H1 (cell line): ENCODE measurements at regions of chr12 and their contacts with region 1.

Region 1: GRCh38 chr12:46071769-46072624 is 81.6 kb upstream of the SCAF11 start:
- DNase-seq: peak; percentile 46 to 80
- H3K4me3 ChIP-seq: no peak overlapping the region
- H3K27ac ChIP-seq: no peak overlapping the region
- H3K4me1 ChIP-seq: no peaks in the 10 kb centered on the region
- H3K27me3 ChIP-seq: no peaks in the 10 kb centered on the region
- CTCF ChIP-seq: peak; percentile 88 to 96 (median 91)
- EP300 ChIP-seq: no peak
- POLR2A ChIP-seq: no peak
- RAD21 ChIP-seq: peak; percentile 92 to 93

Region 2: GRCh38 chr12:45914090-45914489 is 157.9 kb before region 1 on chr12:
- CTCF ChIA-PET with region 1: no interaction called
- POLR2A ChIA-PET with region 1: no interaction called
- DNase-seq: no peak
- H3K4me3 ChIP-seq: no peak overlapping the region
- H3K27ac ChIP-seq: no peak overlapping the region
- H3K4me1 ChIP-seq: no peaks in the 10 kb centered on the region
- H3K27me3 ChIP-seq: no peaks in the 10 kb centered on the region
- CTCF ChIP-seq: no peak
- EP300 ChIP-seq: no peak
- POLR2A ChIP-seq: no peak
- RAD21 ChIP-seq: no peak

Region 3: GRCh38 chr12:46084666-46085631 is 13.0 kb after region 1 on chr12:
- CTCF ChIA-PET with region 1: interaction called, 21 read pairs
- POLR2A ChIA-PET with region 1: interaction called, 3 read pairs
- DNase-seq: no peak
- H3K4me3 ChIP-seq: no peak overlapping the region
- H3K27ac ChIP-seq: no peak overlapping the region
- H3K4me1 ChIP-seq: no peaks in the 10 kb centered on the region
- H3K27me3 ChIP-seq: no peaks in the 10 kb centered on the region
- CTCF ChIP-seq: no peak
- EP300 ChIP-seq: no peak
- POLR2A ChIP-seq: no peak
- RAD21 ChIP-seq: no peak